Activated CD4-positive, alpha-beta T cell treated with anti-CD3 and anti-CD28 coated beads, Interleukin-2, amount 10 ng/mL, durations not matched to agents 7 days and 5 days (primary cell): ENCODE measurements at regions of chr20 and their contacts with region 1.

Region 1: GRCh38 chr20:32823078-32823477 is 3.3 kb downstream of the MAPRE1 start:
- DNase-seq: no peak
- H3K4me3 Mint-ChIP-seq: no peak overlapping the region
- H3K27ac Mint-ChIP-seq: peak overlapping the region; percentile 19
- H3K4me1 Mint-ChIP-seq: peaks cover 48% of the 10 kb centered on the region
- H3K27me3 Mint-ChIP-seq: no peaks in the 10 kb centered on the region

Region 2: DNA sequence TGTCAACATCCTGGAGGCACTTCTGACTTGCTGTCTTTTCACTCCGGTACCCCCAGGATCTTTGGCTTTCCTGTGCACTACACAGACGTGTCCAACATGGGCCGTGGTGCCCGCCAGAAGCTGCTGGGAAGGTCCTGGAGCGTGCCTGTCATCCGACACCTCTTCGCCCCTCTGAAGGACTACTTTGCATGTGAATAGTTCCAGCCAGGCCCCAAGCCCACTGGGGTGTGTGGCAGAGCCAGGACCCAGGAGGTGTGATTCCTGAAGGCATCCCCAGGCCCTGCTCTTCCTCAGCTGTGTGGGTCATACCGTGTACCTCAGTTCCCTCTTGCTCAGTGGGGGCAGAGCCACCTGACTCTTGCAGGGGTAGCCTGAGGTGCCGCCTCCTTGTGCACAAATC is 15.4 kb before region 1 on chr20:
- CTCF ChIA-PET with region 1: no interaction called
- POLR2A ChIA-PET with region 1: no interaction called
- DNase-seq: no peak
- H3K4me3 Mint-ChIP-seq: no peak overlapping the region
- H3K27ac Mint-ChIP-seq: no peak overlapping the region
- H3K4me1 Mint-ChIP-seq: no peaks in the 10 kb centered on the region
- H3K27me3 Mint-ChIP-seq: no peaks in the 10 kb centered on the region

Region 3: DNA sequence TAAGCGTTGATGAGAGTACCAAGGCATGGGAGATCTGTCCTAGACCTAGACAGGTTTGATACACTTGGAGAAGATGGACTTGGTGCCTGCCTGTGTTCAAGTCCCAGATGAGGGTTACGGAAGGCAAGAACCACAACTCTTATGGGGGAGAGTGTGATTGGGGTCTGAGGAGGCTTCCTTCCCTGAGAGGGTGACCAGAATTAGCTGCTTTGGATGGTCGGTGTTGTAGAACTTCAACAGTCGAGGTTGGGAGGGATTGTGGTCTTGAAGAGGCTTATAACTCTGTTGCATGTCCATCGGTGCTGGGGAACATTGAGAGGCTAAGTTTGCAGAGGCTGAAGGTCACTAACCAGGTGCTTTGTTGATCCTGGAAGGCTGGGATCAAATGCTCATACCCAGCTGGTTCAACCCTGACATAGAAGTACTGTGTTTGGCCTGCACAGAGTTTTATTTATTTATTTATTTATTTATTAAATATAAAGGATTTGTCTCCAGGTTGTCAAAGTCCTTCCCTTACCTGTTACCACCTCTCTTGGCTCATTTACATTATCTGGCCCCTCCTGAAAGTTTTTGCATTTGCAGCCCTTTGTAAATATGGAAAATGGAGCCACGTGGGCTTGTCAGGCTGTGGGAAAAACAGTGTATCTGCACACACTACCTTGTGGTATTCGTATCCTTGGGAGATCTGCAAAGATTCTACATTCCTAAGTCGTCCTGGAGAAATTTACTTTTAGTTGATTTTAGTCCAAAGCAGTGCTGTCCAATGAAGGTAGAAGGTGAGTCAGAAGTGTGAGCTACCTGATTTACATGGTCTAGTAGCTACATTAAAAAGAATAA is 19.8 kb after region 1 on chr20:
- CTCF ChIA-PET with region 1: interaction called, 11 read pairs
- POLR2A ChIA-PET with region 1: no interaction called
- DNase-seq: no peak
- H3K4me3 Mint-ChIP-seq: no peak overlapping the region
- H3K27ac Mint-ChIP-seq: no peak overlapping the region
- H3K4me1 Mint-ChIP-seq: peaks cover 41% of the 10 kb centered on the region
- H3K27me3 Mint-ChIP-seq: no peaks in the 10 kb centered on the region

Region 4: GRCh38 chr20:32869562-32869961 is 46.5 kb after region 1 on chr20:
- CTCF ChIA-PET with region 1: no interaction called
- POLR2A ChIA-PET with region 1: no interaction called
- DNase-seq: no peak
- H3K4me3 Mint-ChIP-seq: no peak overlapping the region
- H3K27ac Mint-ChIP-seq: no peak overlapping the region
- H3K4me1 Mint-ChIP-seq: no peaks in the 10 kb centered on the region
- H3K27me3 Mint-ChIP-seq: no peaks in the 10 kb centered on the region